ENCODE measurements at regions of chr20 and their contacts with region 1.

Region 1: DNA sequence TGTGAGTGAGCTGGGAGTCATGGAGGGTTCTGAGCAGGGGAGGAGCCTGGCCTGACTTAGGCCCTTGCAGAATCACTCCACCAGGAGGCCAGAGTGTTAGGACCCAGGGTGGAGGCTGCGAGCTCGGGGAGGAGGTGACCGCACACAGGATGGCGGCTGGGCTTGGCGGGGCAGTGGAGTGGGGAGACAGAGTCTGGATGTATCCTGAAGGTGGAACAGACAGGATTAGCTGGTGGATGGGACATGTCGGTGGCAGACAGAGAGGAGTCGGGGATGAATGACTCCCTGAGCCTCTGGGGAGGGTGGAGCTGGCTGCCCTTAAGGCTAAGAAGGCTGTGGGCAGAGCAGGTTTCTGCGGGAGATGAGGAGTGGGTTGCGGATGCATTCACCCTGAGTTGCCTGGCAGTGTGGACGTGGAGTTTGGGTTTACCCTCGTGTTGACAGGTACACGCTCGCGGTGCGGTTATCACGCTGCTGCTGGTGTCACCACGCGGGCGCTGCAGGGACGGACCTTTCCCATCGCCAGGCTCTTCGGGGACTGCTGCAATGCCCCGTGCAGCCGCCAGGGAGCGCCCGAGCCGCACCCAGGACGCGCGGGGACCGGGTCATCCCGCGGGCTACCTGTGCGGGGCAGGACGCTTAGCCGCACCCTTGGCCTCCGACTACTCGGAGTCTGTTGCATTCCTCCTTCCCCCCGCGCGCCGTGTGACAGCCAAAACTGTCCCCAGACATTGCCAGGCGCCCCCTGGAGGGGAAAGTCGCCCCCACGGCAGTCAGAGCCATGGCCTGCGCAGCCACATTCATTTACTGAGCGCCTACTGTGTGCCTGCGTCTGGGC is 43.0 kb upstream of the PTGIS start:
- DNase-seq: peak; percentile 92 to 98
- ATAC-seq: peak; percentile 87 to 92
- H3K4me3 ChIP-seq: peak overlapping the region; percentile 52
- H3K27ac ChIP-seq: peak overlapping the region; percentile 85 to 88
- H3K4me1 ChIP-seq: peaks cover 27% of the 10 kb centered on the region
- CTCF ChIP-seq: peak; percentile 97
- EP300 ChIP-seq: no peak
- POLR2A ChIP-seq: peak; percentile 54
- RAD21 ChIP-seq: peak; percentile 97 to 100

Region 2: DNA sequence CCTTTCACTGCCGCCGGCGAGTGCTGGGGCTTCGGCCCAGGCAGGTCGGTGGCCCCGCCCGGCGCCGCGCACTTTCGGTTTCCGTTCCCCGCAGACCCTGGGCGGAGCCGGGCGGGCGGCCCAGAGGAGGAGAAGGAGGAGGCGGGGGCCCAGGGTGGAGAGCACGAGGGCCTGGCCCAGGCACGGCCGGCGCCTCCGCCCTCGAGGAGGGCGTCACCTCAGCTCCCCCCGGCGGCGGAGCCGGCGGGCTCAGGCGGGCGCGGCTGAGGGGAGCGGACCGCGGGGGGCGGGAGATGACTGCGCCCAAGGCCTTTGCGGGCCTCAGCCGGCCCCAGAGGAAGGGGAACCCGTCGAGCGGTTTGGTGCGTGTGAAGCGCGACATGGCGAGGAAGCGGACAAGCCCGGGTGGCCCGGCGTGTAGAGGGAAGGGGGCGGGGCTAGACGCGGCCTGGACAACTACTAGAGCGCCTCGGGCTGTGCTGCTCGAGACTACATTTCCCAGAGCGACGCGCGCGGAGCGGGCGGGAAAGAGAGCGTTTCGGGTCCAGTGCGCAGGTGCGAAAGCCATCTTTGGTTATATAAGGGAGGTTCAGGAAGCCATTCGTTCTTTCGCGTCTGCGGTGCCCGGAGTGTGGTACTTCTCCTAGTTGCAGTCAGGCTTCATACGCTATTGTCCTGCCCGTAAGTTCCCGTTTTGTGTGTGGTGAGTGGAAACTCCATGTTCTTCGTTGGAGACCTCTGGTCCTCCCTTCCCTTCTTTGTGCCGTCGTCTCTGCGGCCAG is 332.7 kb before region 1 on chr20 and contains the start of gene ZNFX1:
- CTCF ChIA-PET with region 1: no interaction called
- POLR2A ChIA-PET with region 1: interaction called, 10 read pairs
- DNase-seq: peak; percentile 93 to 98
- ATAC-seq: peak; percentile 87 to 89
- H3K4me3 ChIP-seq: peak within 1 kb of the TSS; percentile 92
- H3K27ac ChIP-seq: peak within 1 kb of the TSS; percentile 98
- H3K4me1 ChIP-seq: peaks cover 33% of the 10 kb centered on the region
- CTCF ChIP-seq: no peak
- EP300 ChIP-seq: no peak
- POLR2A ChIP-seq: peak; percentile 100
- RAD21 ChIP-seq: no peak
- polyA plus RNA-seq, gene ZNFX1: 6.0 and 14.2 TPM in 2 replicates

Region 3: DNA sequence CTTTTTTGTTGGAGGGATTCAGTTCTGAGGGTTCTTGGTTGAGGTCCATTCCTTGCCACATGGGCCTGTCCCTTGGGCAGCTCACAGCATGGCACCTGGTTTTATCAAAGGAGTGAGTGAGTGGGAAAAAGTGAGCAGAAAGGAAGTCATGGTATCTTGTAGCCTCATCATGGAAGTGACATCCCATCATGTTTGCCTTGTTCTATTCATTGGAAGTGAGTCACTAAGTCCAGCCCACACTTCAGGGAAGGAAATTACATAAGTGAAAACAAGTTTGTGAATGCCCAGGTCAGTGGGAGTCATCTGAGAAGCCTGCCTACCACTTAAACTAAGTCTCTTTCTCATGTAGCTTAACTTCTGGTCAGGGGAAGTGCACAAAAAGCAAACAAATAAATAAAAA is 300.2 kb before region 1 on chr20:
- CTCF ChIA-PET with region 1: no interaction called
- POLR2A ChIA-PET with region 1: no interaction called
- DNase-seq: no peak
- ATAC-seq: no peak
- H3K4me3 ChIP-seq: no peak overlapping the region
- H3K27ac ChIP-seq: no peak overlapping the region
- H3K4me1 ChIP-seq: no peaks in the 10 kb centered on the region
- CTCF ChIP-seq: no peak
- EP300 ChIP-seq: no peak
- POLR2A ChIP-seq: no peak
- RAD21 ChIP-seq: no peak

Region 4: DNA sequence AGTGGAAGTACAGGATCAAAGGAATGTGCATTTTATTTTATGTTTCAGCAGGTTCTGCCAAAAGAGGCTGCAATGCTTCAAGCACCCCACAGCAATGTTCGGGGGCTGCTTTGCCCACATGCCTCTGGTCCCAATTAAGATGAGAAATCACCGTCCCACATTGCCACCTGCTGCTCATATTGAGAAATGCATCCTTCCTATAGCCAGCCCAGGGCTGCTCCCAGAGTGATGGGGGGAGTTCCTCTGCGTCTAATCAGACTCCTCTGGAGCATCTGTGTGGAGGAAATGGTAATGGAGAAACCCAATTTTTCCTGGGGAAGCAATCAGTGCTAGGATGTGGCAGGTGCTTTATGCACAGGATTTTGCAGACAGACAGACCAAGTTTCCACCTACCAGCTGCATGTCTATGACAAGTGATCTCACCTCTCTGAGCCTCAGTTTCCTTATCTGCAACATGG is 76.6 kb before region 1 on chr20:
- CTCF ChIA-PET with region 1: interaction called, 546 read pairs
- POLR2A ChIA-PET with region 1: no interaction called
- DNase-seq: peak; percentile 57 to 80
- ATAC-seq: peak; percentile 91
- H3K4me3 ChIP-seq: no peak overlapping the region
- H3K27ac ChIP-seq: no peak overlapping the region
- H3K4me1 ChIP-seq: no peaks in the 10 kb centered on the region
- CTCF ChIP-seq: peak; percentile 85
- EP300 ChIP-seq: no peak
- POLR2A ChIP-seq: no peak
- RAD21 ChIP-seq: peak; percentile 81 to 82

Region 5: GRCh38 chr20:49575551-49576060 is 35.3 kb before region 1 on chr20:
- CTCF ChIA-PET with region 1: interaction called, 115 read pairs
- POLR2A ChIA-PET with region 1: no interaction called
- DNase-seq: peak in 1 of 2 experiments; percentile 33
- ATAC-seq: peak in 1 of 2 experiments; percentile 55; a peak in 3 of 6 replicates
- H3K4me3 ChIP-seq: no peak overlapping the region
- H3K27ac ChIP-seq: peak overlapping the region; percentile 57 to 67
- H3K4me1 ChIP-seq: peaks cover 22% of the 10 kb centered on the region
- CTCF ChIP-seq: no peak
- EP300 ChIP-seq: no peak
- POLR2A ChIP-seq: no peak
- RAD21 ChIP-seq: no peak

Region 6: GRCh38 chr20:49641683-49642656 is 31.1 kb after region 1 on chr20:
- CTCF ChIA-PET with region 1: interaction called, 14 read pairs
- POLR2A ChIA-PET with region 1: no interaction called
- DNase-seq: no peak
- ATAC-seq: no peak
- H3K4me3 ChIP-seq: no peak overlapping the region
- H3K27ac ChIP-seq: peak overlapping the region in 1 of 2 experiments; percentile 22; a peak in 1 of 6 replicates
- H3K4me1 ChIP-seq: peaks cover 17% of the 10 kb centered on the region
- CTCF ChIP-seq: no peak
- EP300 ChIP-seq: no peak
- POLR2A ChIP-seq: no peak
- RAD21 ChIP-seq: no peak

Region 7: GRCh38 chr20:49690899-49691620 is 80.1 kb after region 1 on chr20:
- CTCF ChIA-PET with region 1: interaction called, 25 read pairs
- POLR2A ChIA-PET with region 1: no interaction called
- DNase-seq: peak in 1 of 2 experiments; percentile 91
- ATAC-seq: peak; percentile 76 to 81
- H3K4me3 ChIP-seq: peak overlapping the region; percentile 12; the same call in 2 of the 3 replicates
- H3K27ac ChIP-seq: peak overlapping the region; percentile 98
- H3K4me1 ChIP-seq: peaks cover 95% of the 10 kb centered on the region
- CTCF ChIP-seq: no peak
- EP300 ChIP-seq: peak; percentile 55 to 70; a peak in 3 of 5 replicates
- POLR2A ChIP-seq: no peak
- RAD21 ChIP-seq: peak in 1 of 2 experiments; percentile 44; a peak in 2 of 5 replicates

Region 8: DNA sequence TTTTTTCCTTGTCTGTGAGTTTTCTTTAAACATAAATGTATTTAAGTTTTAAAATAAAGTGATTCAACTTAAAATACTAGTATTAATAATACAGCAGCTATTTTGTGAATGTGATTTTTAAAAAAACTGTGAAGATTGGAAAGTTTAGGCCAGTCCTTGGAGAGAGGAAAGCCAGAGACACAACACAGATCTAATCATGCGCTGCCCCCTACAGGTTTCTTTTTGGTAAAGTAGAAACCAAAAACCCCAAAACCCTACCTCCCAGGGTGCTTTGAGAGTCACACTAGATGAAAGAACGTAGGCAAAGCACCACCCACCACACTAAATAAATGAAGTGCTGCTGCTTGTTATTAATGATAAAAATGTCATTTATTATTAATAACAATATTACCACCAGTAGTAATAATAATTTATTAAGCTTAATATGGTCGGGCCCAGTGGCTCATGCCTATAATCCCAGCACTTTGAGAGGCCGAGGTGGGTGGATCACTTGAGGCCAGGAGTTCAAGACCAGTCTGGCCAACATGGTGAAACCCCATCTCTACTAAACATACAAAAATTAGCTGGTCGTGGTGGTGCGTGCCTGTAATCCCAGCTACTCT is 235.4 kb after region 1 on chr20:
- CTCF ChIA-PET with region 1: interaction called, 319 read pairs
- POLR2A ChIA-PET with region 1: no interaction called
- DNase-seq: peak; percentile 47 to 72
- ATAC-seq: peak; percentile 92 to 96
- H3K4me3 ChIP-seq: no peak overlapping the region
- H3K27ac ChIP-seq: peak overlapping the region; percentile 59 to 74; a peak in 5 of 6 replicates
- H3K4me1 ChIP-seq: peaks cover 20% of the 10 kb centered on the region; the same call in 1 of the 3 replicates
- CTCF ChIP-seq: peak; percentile 86
- EP300 ChIP-seq: no peak
- POLR2A ChIP-seq: no peak
- RAD21 ChIP-seq: peak; percentile 89 to 91

Region 9: GRCh38 chr20:50546729-50547314 is 935.9 kb after region 1 on chr20:
- CTCF ChIA-PET with region 1: no interaction called
- POLR2A ChIA-PET with region 1: no interaction called
- DNase-seq: no peak
- ATAC-seq: no peak
- H3K4me3 ChIP-seq: no peak overlapping the region
- H3K27ac ChIP-seq: no peak overlapping the region
- H3K4me1 ChIP-seq: peaks cover 2% of the 10 kb centered on the region; the same call in 1 of the 3 replicates
- CTCF ChIP-seq: no peak
- EP300 ChIP-seq: no peak
- POLR2A ChIP-seq: no peak
- RAD21 ChIP-seq: no peak